GM12878 (cell line): ENCODE measurements at regions of chr20 and their contacts with region 1.

Region 1: GRCh38 chr20:47038566-47039560 is 144.2 kb downstream of the EYA2 start:
- DNase-seq: no peak
- ATAC-seq: no peak
- H3K4me3 ChIP-seq: no peak overlapping the region
- H3K27ac ChIP-seq: no peak overlapping the region
- H3K4me1 ChIP-seq: no peaks in the 10 kb centered on the region
- H3K27me3 ChIP-seq: no peaks in the 10 kb centered on the region; a peak in 1 of 4 replicates
- CTCF ChIP-seq: no peak
- EP300 ChIP-seq: no peak
- POLR2A ChIP-seq: no peak
- RAD21 ChIP-seq: no peak

Region 2: DNA sequence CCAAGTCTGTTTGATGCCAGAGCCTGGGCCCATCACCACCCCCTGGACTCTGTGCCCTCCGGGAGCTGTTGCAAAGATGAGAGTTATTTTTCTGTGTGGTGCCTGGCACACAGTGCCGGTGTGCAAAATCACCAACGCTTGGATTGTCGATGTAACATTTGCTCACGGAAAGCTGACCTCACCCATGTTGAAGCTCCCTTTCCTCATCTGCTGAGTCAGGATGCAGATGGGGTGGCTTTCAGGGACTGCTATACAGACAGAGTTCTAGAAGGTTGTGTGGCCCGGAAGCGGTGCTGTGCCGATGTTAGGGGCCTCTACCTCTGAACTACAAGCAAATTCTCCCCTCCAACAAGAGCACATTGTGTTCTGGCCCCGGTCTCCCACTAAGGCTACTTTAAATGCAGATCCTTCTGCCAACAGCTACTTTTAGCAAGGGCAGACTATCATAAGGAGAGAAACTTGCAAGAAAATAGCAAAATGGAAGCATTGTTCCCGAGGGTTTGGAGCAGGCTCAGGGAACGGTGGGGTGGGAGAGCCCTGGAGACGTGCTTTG is 110.2 kb before region 1 on chr20:
- CTCF ChIA-PET with region 1: no interaction called
- POLR2A ChIA-PET with region 1: no interaction called
- RAD21 ChIA-PET with region 1: no interaction called
- SMC1A ChIA-PET with region 1: no interaction called
- in situ Hi-C with region 1: no loop called
- intact Hi-C with region 1: loop called (anchors 10 kb)
- DNase-seq: no peak
- ATAC-seq: no peak
- H3K4me3 ChIP-seq: no peak overlapping the region
- H3K27ac ChIP-seq: no peak overlapping the region
- H3K4me1 ChIP-seq: no peaks in the 10 kb centered on the region
- H3K27me3 ChIP-seq: no peaks in the 10 kb centered on the region; a peak in 1 of 4 replicates
- CTCF ChIP-seq: no peak
- EP300 ChIP-seq: no peak
- POLR2A ChIP-seq: no peak
- RAD21 ChIP-seq: no peak

Region 3: DNA sequence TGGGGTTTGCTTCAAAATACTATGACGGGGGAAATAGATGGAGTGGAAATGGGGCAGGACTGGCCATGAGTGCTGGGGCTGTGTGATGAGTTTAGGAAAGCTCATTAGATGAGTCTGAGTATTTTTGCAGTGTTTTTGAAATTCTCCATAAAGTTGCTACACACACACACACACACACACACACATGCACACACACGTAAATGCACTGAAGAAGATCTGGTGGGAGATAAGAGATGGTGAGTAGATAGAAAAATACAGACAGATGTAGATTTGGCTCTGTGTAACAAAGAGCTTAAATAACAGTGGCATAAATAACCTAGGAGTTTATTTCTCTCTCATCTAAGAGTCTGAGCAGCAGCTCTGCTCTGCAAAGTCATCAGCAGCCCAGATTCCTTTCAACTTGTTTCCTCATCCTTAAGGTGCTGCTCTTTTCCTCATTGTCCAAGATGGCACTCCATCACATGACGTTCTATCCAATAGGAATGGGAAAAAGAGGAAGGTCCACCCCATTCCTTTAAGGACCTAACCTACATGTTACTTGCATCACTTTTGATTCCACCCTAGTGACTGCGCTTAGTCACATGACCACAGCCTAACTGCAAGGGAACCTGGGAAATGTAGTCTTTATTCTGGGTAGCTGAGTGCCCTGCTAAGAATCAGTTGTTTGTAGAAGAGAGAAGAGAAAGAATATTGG is 67.8 kb before region 1 on chr20:
- CTCF ChIA-PET with region 1: no interaction called
- POLR2A ChIA-PET with region 1: no interaction called
- RAD21 ChIA-PET with region 1: no interaction called
- SMC1A ChIA-PET with region 1: no interaction called
- in situ Hi-C with region 1: no loop called
- intact Hi-C with region 1: loop called (anchors 10 kb)
- DNase-seq: no peak
- ATAC-seq: peak; percentile 82
- H3K4me3 ChIP-seq: no peak overlapping the region
- H3K27ac ChIP-seq: no peak overlapping the region
- H3K4me1 ChIP-seq: no peaks in the 10 kb centered on the region
- H3K27me3 ChIP-seq: no peaks in the 10 kb centered on the region
- CTCF ChIP-seq: no peak
- EP300 ChIP-seq: no peak
- POLR2A ChIP-seq: no peak
- RAD21 ChIP-seq: no peak

Region 4: GRCh38 chr20:47468290-47469050 is 429.6 kb after region 1 on chr20:
- CTCF ChIA-PET with region 1: no interaction called
- POLR2A ChIA-PET with region 1: no interaction called
- RAD21 ChIA-PET with region 1: no interaction called
- SMC1A ChIA-PET with region 1: no interaction called
- in situ Hi-C with region 1: no loop called
- intact Hi-C with region 1: no loop called
- DNase-seq: peak; percentile 85
- ATAC-seq: peak; percentile 90
- H3K4me3 ChIP-seq: 0 out of 2 replicates have a peak overlapping the region, but pooled peaks have one; percentile 37
- H3K27ac ChIP-seq: peak overlapping the region; percentile 91
- H3K4me1 ChIP-seq: peaks cover 45% of the 10 kb centered on the region
- H3K27me3 ChIP-seq: no peaks in the 10 kb centered on the region
- CTCF ChIP-seq: no peak
- EP300 ChIP-seq: peak; percentile 88 to 96
- POLR2A ChIP-seq: peak; percentile 41; the same call in 1 of the 2 replicates
- RAD21 ChIP-seq: peak; percentile 9; the same call in 1 of the 2 replicates